ENCODE measurements at regions of chr9 and their contacts with region 1.

Region 1: GRCh38 chr9:34603610-34604231 is 8.2 kb downstream of the RPP25L start:
- DNase-seq: peak; percentile 86
- ATAC-seq: peak; percentile 92
- H3K4me3 Mint-ChIP-seq: no peak overlapping the region
- H3K27ac Mint-ChIP-seq: no peak overlapping the region
- H3K4me1 Mint-ChIP-seq: no peaks in the 10 kb centered on the region
- H3K27me3 Mint-ChIP-seq: peaks cover 12% of the 10 kb centered on the region

Region 2: DNA sequence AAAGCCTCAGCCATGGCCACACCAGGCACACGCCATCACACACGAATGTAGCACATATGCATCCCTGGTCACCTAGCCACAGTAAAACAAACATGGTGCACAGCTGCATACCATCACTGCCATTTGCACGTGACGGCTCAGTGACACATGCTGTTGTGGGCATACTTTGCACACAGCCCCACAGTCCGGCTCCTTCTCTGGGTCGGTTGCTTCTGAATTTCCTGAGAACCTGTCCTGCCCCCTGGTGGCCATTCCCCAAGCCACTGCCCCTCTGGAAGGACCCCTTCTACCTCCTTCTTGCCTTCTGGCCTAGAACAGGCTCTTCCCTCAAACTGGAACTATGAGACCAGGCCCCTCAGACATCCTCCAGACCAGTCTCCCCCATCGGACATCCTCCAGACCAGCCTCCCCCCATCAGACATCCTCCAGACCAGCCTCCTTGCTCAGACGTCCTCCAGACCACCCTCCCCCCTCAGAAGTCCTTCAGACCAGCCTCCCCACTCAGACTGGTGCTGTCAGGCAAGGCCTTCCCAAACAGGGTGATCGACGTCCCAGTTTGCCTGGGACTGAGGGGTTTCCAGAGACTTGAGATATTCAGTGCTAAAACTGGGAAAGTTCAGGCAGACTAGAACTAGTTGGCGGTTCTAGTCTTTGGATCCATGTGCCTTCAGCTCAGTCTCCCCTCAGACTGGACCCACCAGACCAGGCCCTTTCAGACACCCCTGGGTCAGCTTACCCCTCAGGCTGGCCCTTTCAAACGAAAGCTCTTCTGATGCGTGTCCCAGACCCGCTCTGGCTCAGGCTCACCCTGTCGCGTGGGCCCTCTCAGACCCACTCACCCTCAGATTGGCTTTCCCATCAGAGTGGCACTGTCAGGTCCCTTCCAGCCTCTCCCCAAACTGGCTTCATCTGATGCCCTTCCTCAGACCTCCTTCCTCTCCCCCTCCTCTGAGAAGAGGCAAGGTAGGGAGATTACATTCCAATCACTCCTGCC is 56.6 kb before region 1 on chr9:
- CTCF ChIA-PET with region 1: interaction called, 13 read pairs
- DNase-seq: peak; percentile 71
- ATAC-seq: peak; percentile 65
- H3K4me3 Mint-ChIP-seq: no peak overlapping the region
- H3K27ac Mint-ChIP-seq: no peak overlapping the region
- H3K4me1 Mint-ChIP-seq: no peaks in the 10 kb centered on the region
- H3K27me3 Mint-ChIP-seq: peaks cover 18% of the 10 kb centered on the region

Region 3: GRCh38 chr9:34591248-34591916 is 12.3 kb before region 1 on chr9:
- CTCF ChIA-PET with region 1: interaction called, 17 read pairs
- DNase-seq: peak; percentile 80
- ATAC-seq: peak; percentile 91
- H3K4me3 Mint-ChIP-seq: peak overlapping the region; percentile 9
- H3K27ac Mint-ChIP-seq: no peak overlapping the region
- H3K4me1 Mint-ChIP-seq: peaks cover 22% of the 10 kb centered on the region
- H3K27me3 Mint-ChIP-seq: peaks cover 83% of the 10 kb centered on the region

Region 4: DNA sequence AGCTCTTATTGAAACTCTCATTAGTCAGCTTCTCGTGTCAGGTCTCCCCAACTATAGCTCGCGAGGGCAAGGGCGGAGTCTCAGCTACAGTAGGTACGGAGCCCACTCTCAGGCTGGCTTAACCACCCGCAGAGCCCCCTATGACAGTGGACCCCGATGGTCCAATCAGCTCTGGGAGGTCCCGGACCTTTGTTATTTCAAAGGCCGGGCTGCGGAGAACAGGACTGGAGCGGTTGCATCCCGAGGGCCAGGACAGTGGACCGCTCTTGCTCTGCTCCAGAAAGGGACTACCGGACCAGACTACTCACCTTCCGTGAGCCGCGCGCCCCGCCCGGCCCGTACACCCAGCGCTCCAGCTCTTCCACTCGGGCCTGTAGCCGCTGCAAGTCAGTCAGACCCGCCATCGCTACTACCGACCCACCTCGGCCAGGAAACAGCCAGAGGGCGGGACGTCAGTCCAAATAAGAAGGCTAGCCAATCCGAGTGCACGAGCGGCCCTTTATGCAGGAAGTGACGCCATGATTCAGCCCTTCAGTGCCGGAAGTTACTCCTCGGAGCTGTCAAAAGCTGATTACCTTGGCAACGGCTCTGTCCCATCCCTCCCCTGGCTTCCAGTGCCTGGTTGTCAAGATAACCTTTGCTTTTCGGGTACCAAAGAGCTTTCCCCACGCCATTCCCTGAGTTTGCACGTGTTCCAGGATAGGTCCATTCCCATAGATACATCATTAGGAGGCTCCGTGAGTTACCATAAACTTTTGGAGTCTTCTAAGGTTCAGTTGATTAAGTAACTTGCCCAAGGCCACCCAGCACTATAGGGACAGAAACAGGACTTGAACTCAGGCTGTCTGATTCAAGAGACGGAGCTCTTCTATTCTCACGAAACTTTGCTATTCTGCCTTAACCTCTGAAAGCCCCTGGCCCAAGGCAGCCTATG is 16.6 kb after region 1 on chr9 and contains the start of gene DCTN3:
- CTCF ChIA-PET with region 1: interaction called, 12 read pairs
- DNase-seq: peak; percentile 97
- ATAC-seq: peak; percentile 99
- H3K4me3 Mint-ChIP-seq: peak within 1 kb of the TSS; percentile 89
- H3K27ac Mint-ChIP-seq: peak within 1 kb of the TSS; percentile 81
- H3K4me1 Mint-ChIP-seq: peaks cover 25% of the 10 kb centered on the region
- H3K27me3 Mint-ChIP-seq: peaks cover 28% of the 10 kb centered on the region
- total RNA-seq, gene DCTN3: 106 to 120 TPM